Endothelial cell of umbilical vein (primary cell): ENCODE measurements at regions of chr5 and their contacts with region 1.

Region 1: DNA sequence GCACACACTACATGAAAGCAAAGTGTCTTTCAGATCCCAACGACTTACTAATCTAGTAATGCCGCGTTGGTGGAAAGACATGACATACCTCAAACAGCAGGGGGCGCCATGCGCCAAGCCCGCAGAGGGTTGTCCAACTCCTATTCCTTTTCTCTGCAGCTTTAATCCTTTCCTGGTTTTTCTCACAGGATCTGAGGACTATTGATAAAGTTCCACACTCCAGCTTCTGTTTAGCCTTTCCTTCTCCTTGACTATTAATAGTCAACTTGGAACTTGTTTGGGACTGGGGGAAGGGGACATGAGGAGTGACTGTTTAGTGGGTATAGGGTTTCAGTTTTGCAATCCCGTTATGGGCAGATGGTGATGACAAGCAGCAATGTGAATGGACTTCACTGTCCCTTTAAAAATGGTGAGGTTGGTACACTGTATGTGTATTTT is 62.9 kb downstream of the OTULIN start:
- DNase-seq: peak; percentile 81
- H3K4me3 ChIP-seq: no peak overlapping the region
- H3K27ac ChIP-seq: no peak overlapping the region
- H3K4me1 ChIP-seq: no peaks in the 10 kb centered on the region
- H3K27me3 ChIP-seq: no peaks in the 10 kb centered on the region
- CTCF ChIP-seq: peak; percentile 88
- POLR2A ChIP-seq: no peak

Region 2: GRCh38 chr5:14569948-14570711 is 157.3 kb before region 1 on chr5:
- CTCF ChIA-PET with region 1: no interaction called
- POLR2A ChIA-PET with region 1: no interaction called
- dilution Hi-C with region 1: no loop called
- intact Hi-C with region 1: no loop called
- DNase-seq: no peak
- H3K4me3 ChIP-seq: no peak overlapping the region
- H3K27ac ChIP-seq: no peak overlapping the region
- H3K4me1 ChIP-seq: no peaks in the 10 kb centered on the region
- H3K27me3 ChIP-seq: peaks cover 0 to 4% of the 10 kb centered on the region in 2 experiments
- CTCF ChIP-seq: no peak
- POLR2A ChIP-seq: no peak

Region 3: GRCh38 chr5:14757850-14758249 is 30.4 kb after region 1 on chr5:
- CTCF ChIA-PET with region 1: interaction called, 3 read pairs
- POLR2A ChIA-PET with region 1: no interaction called
- dilution Hi-C with region 1: no loop called
- intact Hi-C with region 1: loop called (anchors 1 kb)
- DNase-seq: peak; percentile 71
- H3K4me3 ChIP-seq: no peak overlapping the region
- H3K27ac ChIP-seq: peak overlapping the region; percentile 92
- H3K4me1 ChIP-seq: peaks cover 16% of the 10 kb centered on the region
- H3K27me3 ChIP-seq: no peaks in the 10 kb centered on the region
- CTCF ChIP-seq: no peak
- POLR2A ChIP-seq: no peak

Region 4: DNA sequence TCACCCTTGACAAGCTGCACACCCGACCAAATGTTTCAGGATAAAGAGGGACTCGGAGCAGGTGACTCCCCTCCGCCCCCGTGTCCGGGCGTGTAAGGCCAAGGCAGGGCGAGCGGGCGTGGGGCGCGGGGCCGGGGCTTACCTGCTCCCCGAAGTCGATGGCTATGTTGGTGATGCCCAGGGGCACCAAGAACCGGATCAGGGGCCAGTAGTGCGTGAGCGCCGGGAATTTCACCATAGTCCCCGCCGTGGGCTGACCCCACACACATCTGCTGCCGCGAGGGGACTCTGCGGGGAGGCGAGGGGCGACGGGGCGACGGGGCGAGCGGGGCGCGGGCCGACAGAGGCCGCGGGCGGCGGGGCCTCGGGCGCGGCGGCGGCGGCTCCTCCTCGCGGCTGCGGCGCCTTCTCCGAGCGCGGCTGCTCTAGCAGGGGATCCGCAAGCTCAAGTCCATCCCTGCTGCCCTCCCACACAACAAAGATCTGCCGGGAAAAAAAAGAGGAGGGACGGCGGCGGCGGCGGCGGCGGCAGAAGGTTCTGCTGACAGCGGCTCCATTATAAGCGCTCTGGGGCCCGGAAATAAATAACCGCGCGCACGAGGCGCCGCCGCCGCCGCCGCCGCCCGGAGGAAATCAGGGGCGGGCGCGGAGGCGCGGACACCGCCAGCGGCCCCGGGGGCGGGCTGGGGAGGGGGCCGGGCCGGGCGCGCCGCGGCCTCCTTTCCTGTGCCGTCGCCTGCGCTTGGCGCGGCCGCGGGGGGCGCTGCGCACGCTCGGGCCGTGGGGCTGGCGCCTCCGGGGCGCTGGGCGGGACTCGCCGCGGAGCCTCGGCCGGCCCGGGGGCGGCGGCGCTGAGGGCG is 144.0 kb after region 1 on chr5 and contains the start of gene ANKH:
- CTCF ChIA-PET with region 1: interaction called, 50 read pairs
- POLR2A ChIA-PET with region 1: no interaction called
- dilution Hi-C with region 1: no loop called
- intact Hi-C with region 1: loop called (anchors 1 kb)
- DNase-seq: peak; percentile 62
- H3K4me3 ChIP-seq: peak within 1 kb of the TSS; percentile 75 to 91 (median 86)
- H3K27ac ChIP-seq: peak within 1 kb of the TSS; percentile 59
- H3K4me1 ChIP-seq: peaks cover 20% of the 10 kb centered on the region
- H3K27me3 ChIP-seq: peaks cover 4% of the 10 kb centered on the region in 2 experiments
- CTCF ChIP-seq: peak in 1 of 2 donors; percentile 28
- POLR2A ChIP-seq: no peak
- total RNA-seq, gene ANKH: 31.4 and 39.5 TPM in 2 replicates

Region 5: GRCh38 chr5:14914603-14915277 is 187.3 kb after region 1 on chr5:
- CTCF ChIA-PET with region 1: no interaction called
- POLR2A ChIA-PET with region 1: no interaction called
- dilution Hi-C with region 1: no loop called
- intact Hi-C with region 1: no loop called
- DNase-seq: no peak
- H3K4me3 ChIP-seq: no peak overlapping the region
- H3K27ac ChIP-seq: no peak overlapping the region
- H3K4me1 ChIP-seq: no peaks in the 10 kb centered on the region
- H3K27me3 ChIP-seq: peaks cover 0 to 3% of the 10 kb centered on the region in 2 experiments
- CTCF ChIP-seq: no peak
- POLR2A ChIP-seq: no peak

Region 6: DNA sequence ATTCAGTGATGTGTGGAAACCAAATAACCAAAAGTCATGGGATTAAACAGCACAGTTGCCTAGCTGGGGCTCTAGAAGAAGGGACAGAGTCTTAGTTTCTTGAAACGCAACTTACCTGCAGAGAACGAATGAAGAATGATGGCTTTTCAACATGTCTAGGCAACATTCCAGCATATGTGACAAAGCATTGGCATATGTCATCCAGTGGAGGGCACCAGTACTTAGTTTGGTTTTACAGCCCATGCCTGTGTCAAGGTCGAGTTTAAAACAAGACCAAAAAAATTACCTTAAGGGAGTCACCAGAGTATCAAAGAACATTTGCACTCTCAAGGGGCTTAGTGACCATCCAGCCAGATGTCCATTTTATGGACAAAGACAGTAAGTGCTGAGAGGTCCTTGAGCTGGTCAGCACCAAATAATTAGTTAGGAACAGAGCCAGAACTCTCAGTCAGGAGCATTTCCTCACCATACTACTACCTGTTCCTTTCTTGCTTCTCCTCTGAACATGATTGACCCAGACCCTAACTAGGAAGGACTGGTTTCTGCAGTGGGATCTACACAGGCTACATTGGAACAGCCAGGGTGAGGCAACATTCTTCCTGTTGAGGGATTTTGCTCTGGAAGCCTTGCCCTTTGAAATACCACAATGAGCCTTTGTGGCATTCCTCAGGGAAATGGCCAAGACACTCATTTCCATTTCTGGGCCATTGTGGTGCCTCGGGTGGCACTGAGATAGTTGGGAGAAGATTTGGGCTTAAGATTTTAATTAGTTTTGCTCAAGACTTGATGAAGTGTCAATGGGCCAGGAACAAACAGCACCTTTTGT is 219.6 kb after region 1 on chr5:
- CTCF ChIA-PET with region 1: interaction called, 3 read pairs
- POLR2A ChIA-PET with region 1: no interaction called
- dilution Hi-C with region 1: no loop called
- intact Hi-C with region 1: loop called (anchors 1 kb)
- DNase-seq: peak; percentile 30
- H3K4me3 ChIP-seq: no peak overlapping the region
- H3K27ac ChIP-seq: no peak overlapping the region
- H3K4me1 ChIP-seq: no peaks in the 10 kb centered on the region
- H3K27me3 ChIP-seq: peaks cover 0 to 10% of the 10 kb centered on the region in 2 experiments
- CTCF ChIP-seq: peak in 1 of 2 donors; percentile 35
- POLR2A ChIP-seq: no peak

Region 7: DNA sequence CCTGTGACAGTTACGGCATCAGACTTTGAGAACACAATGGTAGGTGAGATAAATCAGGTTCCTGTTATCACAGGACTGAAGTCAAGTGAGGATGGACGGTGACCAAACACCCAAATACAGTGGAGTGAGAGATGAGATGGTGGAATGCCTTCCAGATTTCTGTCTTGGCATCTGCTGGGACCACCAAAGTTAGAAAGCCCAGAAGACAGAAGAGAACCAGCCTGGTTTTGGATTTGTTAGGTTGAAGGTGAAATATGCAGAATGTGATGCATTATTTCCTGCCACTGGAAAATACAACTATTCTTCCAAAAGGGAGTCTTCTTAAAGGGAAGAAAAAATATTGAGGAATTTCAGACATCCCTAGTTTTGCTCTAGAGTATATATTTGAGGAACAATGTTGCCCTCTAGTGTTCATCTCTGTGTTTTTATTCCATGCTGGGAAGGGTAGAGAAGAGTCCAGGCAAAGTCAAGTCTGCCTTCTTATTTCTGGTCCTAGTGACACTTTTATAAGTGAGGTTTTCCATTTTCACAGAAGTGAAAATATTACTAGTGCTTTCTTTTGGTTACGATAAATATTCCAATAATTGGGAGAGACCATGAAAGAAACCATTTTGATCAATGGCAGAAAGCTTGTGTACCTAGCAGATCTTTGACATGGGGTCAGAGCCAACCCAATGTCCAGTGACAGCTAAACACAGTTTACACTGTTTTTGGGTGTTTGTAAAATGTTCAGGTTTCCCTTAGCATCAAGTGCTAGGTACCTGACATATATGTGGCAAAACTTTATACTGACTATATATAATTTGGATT is 286.4 kb after region 1 on chr5:
- CTCF ChIA-PET with region 1: interaction called, 48 read pairs
- POLR2A ChIA-PET with region 1: no interaction called
- dilution Hi-C with region 1: loop called (anchors 25 kb)
- intact Hi-C with region 1: loop called (anchors 1 kb)
- DNase-seq: peak; percentile 74
- H3K4me3 ChIP-seq: no peak overlapping the region
- H3K27ac ChIP-seq: no peak overlapping the region
- H3K4me1 ChIP-seq: peaks cover 11% of the 10 kb centered on the region
- H3K27me3 ChIP-seq: peaks cover 0 to 5% of the 10 kb centered on the region in 2 experiments
- CTCF ChIP-seq: peak; percentile 38 to 39
- POLR2A ChIP-seq: no peak